ENCODE measurements at regions of chr17 and their contacts with region 1.

Region 1: DNA sequence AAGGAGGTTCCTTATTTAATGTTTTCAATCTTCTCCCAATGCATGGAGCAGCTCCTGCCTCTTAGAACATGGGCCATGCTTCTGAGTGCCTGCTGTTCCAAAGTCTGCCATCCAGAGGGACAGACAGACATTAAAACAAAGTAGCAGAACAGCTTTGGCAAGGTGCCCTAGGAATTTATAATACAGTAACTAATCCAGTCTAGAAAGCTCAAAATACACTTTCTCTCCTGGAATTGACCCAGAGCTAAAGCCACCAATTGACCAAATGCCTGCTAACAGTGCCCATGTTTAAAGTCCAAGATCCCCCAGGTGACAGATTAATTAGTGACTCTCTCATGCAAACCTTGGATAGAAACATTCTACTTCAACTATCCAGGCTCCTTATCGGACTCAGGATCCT is 11.1 kb upstream of the CHRNE start:
- DNase-seq: no peak
- ATAC-seq: no peak

Region 2: GRCh38 chr17:5065227-5065744 is 151.3 kb after region 1 on chr17:
- intact Hi-C with region 1: loop called (anchors 10 kb)
- DNase-seq: no peak
- ATAC-seq: no peak

Region 3: DNA sequence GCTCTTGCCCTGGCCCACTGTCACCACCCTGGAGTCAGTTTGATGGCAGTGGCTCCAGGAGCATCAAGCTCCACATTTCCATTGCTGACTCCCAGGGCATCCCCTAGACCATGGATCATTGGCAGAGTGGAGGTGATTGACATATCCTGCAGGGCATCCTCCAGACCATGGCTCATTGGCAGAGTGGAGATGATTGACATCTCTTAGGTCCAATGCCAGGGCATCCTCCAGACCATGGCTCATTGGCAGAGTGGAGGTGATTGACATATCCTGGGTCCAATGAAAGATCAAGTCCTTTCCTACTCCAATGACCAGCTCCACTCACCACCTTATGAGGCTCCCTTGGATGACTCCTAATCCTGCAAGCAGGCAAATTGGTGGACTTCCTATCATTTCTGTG is 844.7 kb after region 1 on chr17:
- intact Hi-C with region 1: no loop called
- DNase-seq: no peak
- ATAC-seq: no peak

Measured in sciatic nerve (tissue), 2 donors.